ENCODE measurements at regions of chr11 and their contacts with region 1.

Region 1: GRCh38 chr11:747158-748006 is at the start of gene TALDO1:
- DNase-seq: peak; percentile 92 to 96 (median 93)
- ATAC-seq: peak; percentile 94
- H3K4me3 ChIP-seq: peak within 1 kb of the TSS; percentile 100
- H3K27ac ChIP-seq: peak within 1 kb of the TSS; percentile 99
- H3K4me1 ChIP-seq: peaks cover 27 to 54% of the 10 kb centered on the region in 2 experiments
- H3K27me3 ChIP-seq: no peaks in the 10 kb centered on the region
- CTCF ChIP-seq: peak in 2 of 3 experiments; percentile 21 to 32; a peak in 3 of 6 replicates
- EP300 ChIP-seq: 0 out of 2 replicates have a peak, but pooled peaks have one; percentile 3
- POLR2A ChIP-seq: peak; percentile 88
- RAD21 ChIP-seq: no peak
- polyA plus RNA-seq, gene TALDO1: 328 to 492 TPM

Region 2: GRCh38 chr11:737371-737770 is 10.0 kb before region 1 on chr11:
- CTCF ChIA-PET with region 1: no interaction called
- POLR2A ChIA-PET with region 1: interaction called, 14 read pairs
- in situ Hi-C with region 1: no loop called
- intact Hi-C with region 1: no loop called
- DNase-seq: peak in 1 of 4 experiments; percentile 4
- ATAC-seq: peak; percentile 38
- H3K4me3 ChIP-seq: no peak overlapping the region
- H3K27ac ChIP-seq: no peak overlapping the region
- H3K4me1 ChIP-seq: peaks cover 10 to 23% of the 10 kb centered on the region in 2 experiments; a peak in 4 of 5 replicates
- H3K27me3 ChIP-seq: no peaks in the 10 kb centered on the region
- CTCF ChIP-seq: no peak
- EP300 ChIP-seq: no peak
- POLR2A ChIP-seq: no peak
- RAD21 ChIP-seq: no peak

Region 3: DNA sequence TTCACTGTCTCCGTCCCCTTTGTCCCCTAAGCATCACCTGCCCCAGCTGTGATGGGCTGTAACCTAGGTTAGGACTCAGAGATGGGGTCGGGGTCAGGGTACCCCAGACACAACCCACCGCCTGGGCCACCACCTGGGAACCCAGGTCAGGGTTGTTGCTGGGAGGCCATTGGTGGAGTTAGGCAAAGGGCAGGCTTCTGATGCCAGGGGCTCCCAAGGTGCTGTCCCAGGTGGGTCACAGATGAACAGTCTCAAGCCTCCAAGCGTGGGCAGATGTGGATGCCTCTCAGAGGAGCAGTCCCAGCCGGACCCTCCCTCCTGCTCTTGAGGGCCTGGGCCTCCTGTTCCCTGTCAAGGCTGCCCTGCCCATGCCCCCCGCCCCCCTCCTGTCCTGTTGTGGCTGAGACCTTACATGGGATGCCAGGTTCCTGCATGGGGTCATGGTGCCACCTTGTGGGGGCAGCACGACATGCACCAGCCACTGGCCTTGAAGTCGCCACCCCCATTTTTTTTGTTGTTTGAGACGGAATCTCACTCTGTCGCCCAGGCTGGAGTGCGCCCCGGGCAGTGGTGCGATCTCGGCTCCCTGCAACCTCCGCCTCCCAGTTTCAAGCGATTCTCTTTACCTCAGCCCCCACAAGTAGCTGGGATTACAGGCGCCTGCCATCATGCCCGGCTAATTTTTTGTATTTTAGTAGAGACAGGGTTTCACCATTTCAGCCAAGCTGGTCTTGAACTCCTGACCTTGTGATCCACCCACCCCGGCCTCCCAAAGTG is 17.8 kb after region 1 on chr11:
- CTCF ChIA-PET with region 1: no interaction called
- POLR2A ChIA-PET with region 1: interaction called, 88 read pairs
- in situ Hi-C with region 1: no loop called
- intact Hi-C with region 1: no loop called
- DNase-seq: peak; percentile 48 to 64 (median 56)
- ATAC-seq: peak; percentile 59
- H3K4me3 ChIP-seq: no peak overlapping the region
- H3K27ac ChIP-seq: no peak overlapping the region
- H3K4me1 ChIP-seq: peaks cover 8 to 40% of the 10 kb centered on the region in 2 experiments; a peak in 4 of 5 replicates
- H3K27me3 ChIP-seq: no peaks in the 10 kb centered on the region
- CTCF ChIP-seq: peak; percentile 54 to 62 (median 55)
- EP300 ChIP-seq: no peak
- POLR2A ChIP-seq: peak; percentile 83
- RAD21 ChIP-seq: peak; percentile 38 to 42

Region 4: GRCh38 chr11:809287-810039 is 62.1 kb after region 1 on chr11 and contains the start of gene RPLP2:
- CTCF ChIA-PET with region 1: no interaction called
- POLR2A ChIA-PET with region 1: interaction called, 10 read pairs
- in situ Hi-C with region 1: no loop called
- intact Hi-C with region 1: no loop called
- DNase-seq: peak; percentile 84 to 99 (median 90)
- ATAC-seq: peak; percentile 83
- H3K4me3 ChIP-seq: peak within 1 kb of the TSS; percentile 99
- H3K27ac ChIP-seq: peak within 1 kb of the TSS; percentile 98
- H3K4me1 ChIP-seq: peaks cover 22 to 63% of the 10 kb centered on the region in 2 experiments; a peak in 4 of 5 replicates
- H3K27me3 ChIP-seq: no peaks in the 10 kb centered on the region
- CTCF ChIP-seq: no peak; a peak in 1 of 6 replicates
- EP300 ChIP-seq: no peak; the same call in 1 of the 2 replicates
- POLR2A ChIP-seq: peak; percentile 93
- RAD21 ChIP-seq: no peak
- polyA plus RNA-seq, gene RPLP2: 1,853 to 1,893 TPM